ENCODE measurements at regions of chr7 and their contacts with region 1.

Region 1: DNA sequence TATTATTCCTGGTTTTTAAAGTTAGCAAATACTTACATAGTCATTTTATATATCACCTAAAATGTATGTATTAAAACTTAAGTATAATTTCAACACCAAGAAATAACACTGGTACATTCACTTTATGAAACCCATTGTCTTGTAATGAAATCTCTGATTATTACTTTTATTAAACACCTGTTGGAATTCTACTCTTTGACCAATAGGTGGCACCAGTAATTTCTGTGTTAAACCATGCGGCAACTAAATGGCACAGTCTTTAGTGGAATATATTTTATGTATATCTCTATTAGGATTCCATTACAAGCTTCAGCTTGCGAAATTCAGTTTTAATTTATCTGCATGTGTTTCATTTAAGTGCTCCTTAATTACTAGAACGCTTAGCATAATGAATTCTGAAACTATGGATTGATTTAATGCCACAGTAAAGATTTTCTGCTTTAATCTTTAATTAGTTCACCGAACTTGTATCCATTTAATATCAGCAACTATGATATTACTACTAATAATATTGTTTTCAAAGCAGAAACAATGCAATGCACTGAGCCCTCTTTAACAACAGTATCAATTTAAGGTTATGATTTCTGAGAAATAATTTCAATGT is 181.3 kb downstream of the MAGI2 start:
- DNase-seq: no peak

Region 2: DNA sequence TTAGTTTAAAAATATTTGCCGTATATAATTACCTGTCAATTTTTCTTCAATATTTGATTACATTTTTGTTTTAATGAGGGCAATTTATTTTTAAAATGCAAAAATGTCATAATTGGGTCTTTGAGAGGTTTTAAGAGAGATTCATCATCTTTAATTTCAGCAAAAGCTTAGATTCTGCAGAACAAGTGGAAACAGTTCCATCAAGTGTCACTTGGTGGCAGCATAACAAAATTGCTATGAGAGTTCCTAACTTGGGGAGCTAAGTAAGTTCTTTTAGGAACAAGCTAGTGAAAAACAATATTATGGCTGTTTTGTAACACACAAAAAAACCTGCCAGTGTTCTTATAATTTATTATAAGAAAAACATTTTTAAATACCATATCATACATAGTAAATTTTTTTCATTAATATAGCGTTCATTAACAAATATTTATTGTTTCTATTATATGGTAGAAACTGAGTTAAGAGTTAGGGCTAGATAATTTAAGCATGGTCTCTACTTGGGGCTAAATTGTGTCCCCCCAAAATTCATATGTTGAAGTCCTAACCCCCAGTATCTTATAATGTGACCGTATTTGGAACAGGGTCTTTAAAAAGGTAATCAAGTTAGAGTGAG is 26.1 kb after region 1 on chr7:
- intact Hi-C with region 1: no loop called
- DNase-seq: no peak

Region 3: GRCh38 chr7:79337717-79338116 is 65.5 kb after region 1 on chr7:
- intact Hi-C with region 1: loop called (anchors 10 kb)
- DNase-seq: no peak

Region 4: DNA sequence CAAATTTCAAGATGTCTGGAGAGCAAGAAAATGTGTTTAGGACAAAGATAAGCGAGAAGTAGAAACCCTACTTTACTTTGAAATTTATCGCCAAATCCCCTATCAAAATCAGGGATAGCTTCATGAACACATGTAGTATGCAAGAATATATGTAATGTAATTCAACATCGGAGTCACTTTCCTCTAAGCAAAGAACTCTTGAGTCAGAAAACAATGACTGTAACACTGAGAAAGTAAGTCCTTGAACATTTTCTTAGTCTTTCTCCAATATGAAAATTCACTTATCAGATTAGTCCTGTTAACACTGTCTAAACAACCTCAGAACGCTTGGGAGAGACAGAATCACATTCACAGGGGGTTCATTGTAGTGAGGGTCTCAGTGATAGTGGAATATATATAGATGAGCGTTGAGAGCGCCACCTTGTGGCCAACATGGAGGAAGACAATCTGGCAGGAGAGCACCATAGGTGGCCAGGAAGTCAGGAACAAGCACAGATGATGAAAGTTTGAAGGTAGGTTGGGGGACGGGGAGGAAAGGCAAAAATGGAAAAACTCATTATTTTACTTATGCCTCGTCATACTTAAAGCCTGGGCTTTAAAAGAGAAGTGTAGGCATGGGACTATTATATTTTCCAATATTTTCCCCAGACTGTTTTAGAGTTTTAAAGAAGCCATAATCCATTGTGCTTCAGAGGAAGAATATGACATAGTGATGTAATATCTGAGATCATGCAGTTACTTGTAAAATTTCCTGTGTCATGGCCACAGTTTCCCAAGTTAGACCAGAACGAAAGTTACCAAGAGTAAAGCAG is 747.0 kb after region 1 on chr7:
- intact Hi-C with region 1: loop called (anchors 10 kb)
- DNase-seq: no peak